CD14-positive monocyte (primary cell): ENCODE measurements at regions of chr3 and their contacts with region 1.

Region 1: DNA sequence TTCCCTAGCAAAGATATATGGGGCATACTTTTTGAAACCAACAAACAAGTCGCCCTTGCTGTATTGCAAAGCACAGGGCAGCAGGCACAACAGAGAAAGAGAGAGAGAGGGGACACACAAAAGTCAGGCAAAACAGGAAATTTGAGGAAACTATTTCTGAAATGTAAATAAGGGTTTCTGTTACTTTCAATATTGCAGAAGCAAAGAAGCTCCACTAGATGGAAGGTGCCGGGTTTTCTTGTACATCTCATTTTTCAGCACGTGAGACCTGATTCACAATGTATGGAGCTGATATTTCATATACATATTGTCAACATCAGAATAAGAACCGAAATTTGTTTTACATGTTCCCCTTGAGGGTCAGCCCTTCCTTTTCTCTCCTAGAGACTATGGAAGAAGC is 127.4 kb downstream of the FOXP1 start:
- DNase-seq: peak in 2 of 3 donors; percentile 36 to 55
- H3K4me3 ChIP-seq: peak overlapping the region; percentile 0 to 58 (median 32)
- H3K4me3 Mint-ChIP-seq: peak overlapping the region; percentile 69 to 91
- H3K27ac ChIP-seq: peak overlapping the region in 1 of 2 donors; percentile 80
- H3K27ac Mint-ChIP-seq: peak overlapping the region; percentile 74 to 97 (median 91)
- H3K4me1 ChIP-seq: peaks cover 35 to 36% of the 10 kb centered on the region in 2 donors
- H3K4me1 Mint-ChIP-seq: peaks cover 65% of the 10 kb centered on the region
- H3K27me3 ChIP-seq: no peaks in the 10 kb centered on the region
- H3K27me3 Mint-ChIP-seq: peaks cover 0 to 3% (median 0%) of the 10 kb centered on the region in 3 donors
- CTCF ChIP-seq: peak; percentile 34

Region 2: GRCh38 chr3:71563827-71564226 is 107.7 kb after region 1 on chr3:
- intact Hi-C with region 1: loop called in 1 of 2 experiments (anchors 10 kb)
- DNase-seq: no peak
- H3K4me3 ChIP-seq: no peak overlapping the region
- H3K4me3 Mint-ChIP-seq: no peak overlapping the region
- H3K27ac ChIP-seq: no peak overlapping the region
- H3K27ac Mint-ChIP-seq: no peak overlapping the region
- H3K4me1 ChIP-seq: peaks cover 0 to 4% of the 10 kb centered on the region in 2 donors
- H3K4me1 Mint-ChIP-seq: peaks cover 44% of the 10 kb centered on the region
- H3K27me3 ChIP-seq: no peaks in the 10 kb centered on the region
- H3K27me3 Mint-ChIP-seq: no peaks in the 10 kb centered on the region
- CTCF ChIP-seq: no peak